GM13977 (cell line): ENCODE measurements at regions of chr21 and their contacts with region 1.

Region 1: GRCh38 chr21:36661511-36662309 is 37.2 kb upstream of the SIM2 start:
- DNase-seq: no peak
- CTCF ChIP-seq: no peak

Region 2: GRCh38 chr21:36513430-36513829 is 148.3 kb before region 1 on chr21:
- in situ Hi-C with region 1: no loop called
- DNase-seq: no peak
- CTCF ChIP-seq: no peak

Region 3: GRCh38 chr21:36773117-36773516 is 111.4 kb after region 1 on chr21:
- in situ Hi-C with region 1: loop called (anchors 25 kb)
- DNase-seq: no peak
- CTCF ChIP-seq: no peak